ENCODE measurements at regions of chr17 and their contacts with region 1.

Region 1: DNA sequence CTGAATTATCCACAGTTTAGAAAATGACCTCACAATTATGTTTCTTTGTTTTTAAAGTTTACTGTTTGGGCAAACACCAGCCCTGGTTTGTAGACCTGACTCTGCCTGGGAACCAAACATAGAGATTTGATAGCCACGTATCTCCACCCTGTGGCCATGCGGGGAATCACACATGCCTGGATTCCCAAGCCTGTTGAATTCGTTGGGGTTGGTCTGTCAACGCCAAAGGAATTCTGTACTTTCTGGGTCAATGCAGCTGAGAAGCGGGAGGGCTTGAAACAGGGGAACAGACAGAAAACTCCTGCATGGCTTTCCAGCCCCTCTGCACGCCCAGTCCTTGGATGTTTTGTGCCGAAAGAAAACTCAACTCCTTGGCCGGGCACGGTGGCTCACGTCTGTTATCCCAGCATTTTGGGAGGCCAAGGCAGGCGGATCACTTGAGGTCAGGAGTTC is 27.0 kb downstream of the CD300A start:
- DNase-seq: peak; percentile 54 to 76
- H3K4me3 ChIP-seq: no peak overlapping the region
- H3K27ac ChIP-seq: no peak overlapping the region
- H3K4me1 ChIP-seq: no peaks in the 10 kb centered on the region
- H3K27me3 ChIP-seq: peaks cover 0 to 17% of the 10 kb centered on the region in 2 donors
- CTCF ChIP-seq: peak; percentile 86 to 87

Region 2: GRCh38 chr17:74368092-74369081 is 125.0 kb before region 1 on chr17:
- intact Hi-C with region 1: loop called (anchors 1 kb)
- DNase-seq: peak; percentile 61 to 83
- H3K4me3 ChIP-seq: no peak overlapping the region
- H3K27ac ChIP-seq: no peak overlapping the region
- H3K4me1 ChIP-seq: peaks cover 0 to 6% (median 3%) of the 10 kb centered on the region in 4 donors
- H3K27me3 ChIP-seq: peaks cover 0 to 57% of the 10 kb centered on the region in 2 donors
- CTCF ChIP-seq: peak; percentile 91 to 98

Region 3: DNA sequence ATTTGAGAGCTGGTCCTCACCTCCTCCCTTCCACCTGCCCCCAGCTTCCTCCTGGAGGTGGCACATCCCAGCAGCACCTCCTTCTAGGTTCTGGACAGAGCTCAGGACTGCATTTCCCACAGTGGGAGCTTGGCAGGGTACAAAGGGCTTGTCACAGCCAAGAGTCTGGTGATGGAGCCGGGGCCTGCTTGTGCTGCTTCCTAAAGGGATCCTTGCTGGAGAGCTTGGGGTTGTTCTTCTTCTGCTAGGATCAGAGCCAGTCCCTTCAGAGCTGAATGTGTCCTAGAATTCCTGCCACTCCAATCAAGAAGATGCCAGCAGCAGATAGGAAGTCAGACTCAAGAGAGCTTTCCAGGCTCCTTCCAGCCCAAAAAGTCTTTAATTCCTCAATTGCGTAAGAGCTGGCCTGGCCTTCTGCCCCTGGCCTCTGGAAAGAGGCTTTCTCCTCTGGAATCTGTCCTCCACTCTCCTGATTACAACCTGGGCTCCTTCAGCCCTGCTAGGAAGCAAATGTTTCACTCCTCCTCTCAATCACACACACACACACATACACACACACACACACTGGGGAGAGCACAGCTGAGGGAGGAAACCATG is 125.8 kb after region 1 on chr17:
- intact Hi-C with region 1: no loop called
- DNase-seq: peak in 1 of 2 donors; percentile 66
- H3K4me3 ChIP-seq: no peak overlapping the region
- H3K27ac ChIP-seq: no peak overlapping the region
- H3K4me1 ChIP-seq: no peaks in the 10 kb centered on the region
- H3K27me3 ChIP-seq: peaks cover 0 to 11% of the 10 kb centered on the region in 2 donors
- CTCF ChIP-seq: no peak

Measured in tibial artery (tissue), 4 donors.